ENCODE measurements at regions of chr16 and their contacts with region 1.

Region 1: DNA sequence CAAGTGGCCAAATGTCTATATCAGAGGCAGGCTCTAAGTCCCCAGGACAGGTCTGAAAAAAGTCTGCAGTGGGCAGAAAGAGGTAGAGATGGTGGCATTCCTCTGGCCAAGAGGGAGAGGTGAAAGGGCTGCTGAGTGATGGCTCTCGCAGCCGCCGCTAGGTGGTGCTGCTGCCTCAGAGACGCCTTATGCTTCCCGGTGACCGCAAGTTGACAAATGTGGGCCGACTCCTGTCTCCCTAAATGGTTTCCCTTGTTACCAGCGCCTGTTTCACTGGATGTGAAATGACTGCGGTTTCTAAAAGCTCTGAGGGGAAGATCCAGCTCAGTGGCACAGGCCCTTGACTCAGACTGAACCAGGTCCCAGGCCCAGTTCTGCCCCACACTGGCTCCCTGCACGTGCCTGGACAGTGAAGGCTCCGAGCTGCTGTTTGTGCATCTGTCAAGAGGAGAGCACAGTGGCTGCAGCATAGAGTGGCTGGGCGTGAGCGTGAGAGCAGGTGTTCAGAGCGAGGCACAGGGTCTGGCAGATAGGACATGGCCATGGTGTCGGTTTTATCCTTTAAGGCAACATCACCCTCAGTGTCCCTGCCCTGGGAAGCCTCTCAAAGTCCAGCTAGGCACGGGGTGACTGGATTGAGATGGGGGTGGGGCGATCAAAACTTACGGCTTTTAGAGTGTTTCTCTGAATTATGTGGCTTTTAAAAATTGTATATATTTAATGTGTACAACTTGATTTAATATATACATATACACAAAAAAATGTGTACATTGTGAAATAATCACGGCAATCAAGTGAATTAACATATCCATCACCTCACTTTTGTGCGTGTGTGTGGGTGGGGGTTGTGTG is 19.9 kb downstream of the CLEC16A start:
- DNase-seq: no peak
- H3K4me3 ChIP-seq: no peak overlapping the region
- CTCF ChIP-seq: peak; percentile 95

Region 2: DNA sequence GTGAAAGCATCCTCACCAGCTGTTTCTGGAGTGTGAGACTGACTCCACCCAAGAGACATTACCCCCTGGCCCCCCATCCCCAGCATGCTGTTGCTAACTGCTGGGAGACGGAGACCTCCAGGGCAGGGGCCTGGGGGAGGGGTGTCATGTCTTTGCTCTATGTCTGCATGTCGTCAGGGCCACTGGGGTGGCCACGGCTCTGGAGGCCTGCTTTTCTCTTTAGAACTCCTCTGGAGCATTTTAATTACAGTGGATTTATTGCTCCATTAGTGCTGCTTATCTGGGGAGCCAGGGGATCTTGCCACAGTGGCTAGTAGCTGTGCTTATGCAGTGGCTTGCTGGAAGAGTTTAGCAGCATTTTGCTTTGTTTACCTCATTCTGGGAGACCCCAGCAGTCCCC is 12.4 kb after region 1 on chr16:
- CTCF ChIA-PET with region 1: interaction called, 31 read pairs
- POLR2A ChIA-PET with region 1: no interaction called
- DNase-seq: no peak
- H3K4me3 ChIP-seq: no peak overlapping the region
- CTCF ChIP-seq: no peak

Region 3: DNA sequence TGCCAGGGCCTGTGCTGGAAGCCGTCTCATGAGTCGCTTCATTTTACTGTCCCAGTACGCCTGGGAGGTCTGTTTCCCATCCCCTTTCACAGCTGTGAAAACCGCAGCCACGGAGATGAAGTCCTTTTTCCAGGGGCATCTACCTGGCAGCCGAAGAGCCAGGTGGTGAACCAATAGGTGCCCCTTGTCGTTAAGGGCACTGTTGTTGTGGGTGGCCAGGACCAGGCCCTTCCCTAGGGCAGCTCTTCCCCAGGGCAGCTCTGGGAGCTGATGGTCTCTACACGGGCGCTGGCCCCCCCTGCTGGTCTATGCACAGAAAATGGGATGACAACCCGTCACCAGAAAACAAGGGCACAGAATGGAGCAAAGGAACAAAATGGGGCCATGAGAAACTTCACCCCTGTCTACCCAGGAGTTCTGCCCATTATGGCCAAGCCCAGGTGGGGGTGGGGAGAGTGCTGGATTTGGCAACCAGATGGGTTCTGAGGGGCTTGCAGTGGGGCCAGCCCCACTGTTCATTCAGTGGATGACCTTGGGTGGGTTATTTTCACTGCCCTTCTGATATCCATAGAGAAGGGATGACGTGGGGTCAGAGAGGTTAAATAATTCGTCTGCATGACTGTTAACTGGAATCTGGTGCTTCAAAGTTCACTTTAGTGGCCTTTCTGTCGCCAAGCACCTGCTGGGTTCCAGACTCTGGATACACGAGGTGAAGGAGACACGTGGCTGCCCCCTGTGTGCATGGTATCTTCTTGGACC is 392.5 kb after region 1 on chr16:
- CTCF ChIA-PET with region 1: interaction called, 102 read pairs
- POLR2A ChIA-PET with region 1: no interaction called
- DNase-seq: no peak
- H3K4me3 ChIP-seq: no peak overlapping the region
- CTCF ChIP-seq: peak; percentile 81

Region 4: GRCh38 chr16:11386791-11387546 is 422.7 kb after region 1 on chr16:
- CTCF ChIA-PET with region 1: interaction called, 23 read pairs
- POLR2A ChIA-PET with region 1: no interaction called
- DNase-seq: no peak
- H3K4me3 ChIP-seq: no peak overlapping the region
- CTCF ChIP-seq: peak; percentile 75

Region 5: GRCh38 chr16:11715246-11715947 is 751.1 kb after region 1 on chr16:
- CTCF ChIA-PET with region 1: interaction called, 36 read pairs
- POLR2A ChIA-PET with region 1: no interaction called
- DNase-seq: no peak
- H3K4me3 ChIP-seq: no peak overlapping the region
- CTCF ChIP-seq: no peak

Measured in AG04449 (cell line).